Heart right ventricle (tissue), 16 donors: ENCODE measurements at regions of chr18 and their contacts with region 1.

Region 1: GRCh38 chr18:56575819-56576663 is 62.4 kb downstream of the TXNL1 start:
- DNase-seq: peak in 1 of 2 donors; percentile 56
- ATAC-seq: peak; percentile 64 to 96 (median 85)
- H3K4me3 ChIP-seq: peak overlapping the region in 2 of 10 donors; percentile 1 to 22
- H3K27ac ChIP-seq: peak overlapping the region; percentile 48 to 90 (median 70)
- H3K4me1 ChIP-seq: peaks cover 10 to 37% (median 33%) of the 10 kb centered on the region in 9 donors
- H3K27me3 ChIP-seq: no peaks in the 10 kb centered on the region
- CTCF ChIP-seq: peak; percentile 53 to 86 (median 71)

Region 2: DNA sequence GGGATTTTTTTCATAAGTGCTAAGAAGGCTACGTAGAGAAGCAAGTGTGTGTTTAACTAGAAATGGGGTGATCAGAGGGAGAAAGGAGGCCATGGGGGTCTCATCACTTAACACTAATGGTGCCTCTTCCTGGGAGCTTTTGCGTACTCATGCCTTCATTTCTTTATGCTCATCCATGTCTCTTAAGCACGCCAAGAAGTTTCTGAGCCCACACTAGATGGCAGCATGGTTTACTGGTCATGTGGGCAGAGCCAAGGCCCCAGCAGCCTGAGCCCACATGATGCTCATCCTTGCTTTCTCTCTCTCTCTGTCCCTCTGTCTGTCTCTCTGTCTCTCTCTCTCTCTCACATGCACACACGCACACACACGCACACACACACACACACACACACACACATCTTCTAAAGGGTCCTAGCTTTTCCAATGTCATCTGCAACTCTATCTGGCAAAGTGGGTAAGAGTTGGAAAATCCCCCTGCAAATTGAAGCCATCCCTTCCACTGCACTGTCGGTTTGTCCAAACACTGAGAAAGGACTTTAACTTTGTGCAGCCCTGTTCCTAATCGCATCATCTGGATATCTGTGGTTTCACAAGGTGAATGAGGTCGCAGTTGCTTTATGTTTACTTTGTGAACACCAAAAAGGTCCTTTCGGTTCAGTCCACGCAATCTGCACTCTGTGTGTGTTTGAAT is 1479.6 kb before region 1 on chr18:
- intact Hi-C with region 1: loop called in 1 of 10 experiments (anchors 10 kb)
- DNase-seq: peak in 1 of 2 donors; percentile 16
- ATAC-seq: peak in 7 of 8 donors; percentile 38 to 89 (median 86)
- H3K4me3 ChIP-seq: no peak overlapping the region
- H3K27ac ChIP-seq: peak overlapping the region in 1 of 10 donors; percentile 30
- H3K4me1 ChIP-seq: peaks cover 0 to 17% (median 8%) of the 10 kb centered on the region in 9 donors
- H3K27me3 ChIP-seq: no peaks in the 10 kb centered on the region
- CTCF ChIP-seq: peak in 8 of 9 donors; percentile 11 to 62 (median 42)

Region 3: DNA sequence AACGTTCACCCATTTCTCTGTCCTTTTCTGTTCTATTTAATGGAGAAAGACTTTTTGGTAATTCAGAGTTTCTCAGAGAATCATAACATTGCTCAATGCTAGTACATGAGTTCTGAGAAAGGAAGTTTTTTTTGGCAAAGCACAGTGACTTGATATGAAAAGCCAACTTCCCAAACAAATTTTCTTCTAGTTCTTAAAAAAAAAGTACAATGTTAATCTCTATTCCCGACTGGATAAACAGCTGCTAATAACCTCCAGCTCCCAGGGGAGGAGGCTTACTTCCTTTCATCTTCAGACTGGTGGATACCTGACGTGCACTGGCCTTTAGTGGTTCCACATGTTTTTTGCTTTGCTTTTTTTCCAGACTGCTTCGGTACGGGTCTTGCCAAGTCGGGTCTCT is 1332.2 kb before region 1 on chr18:
- intact Hi-C with region 1: loop called in 5 of 10 experiments (anchors 5 to 10 kb)
- DNase-seq: peak in 1 of 2 donors; percentile 89
- ATAC-seq: peak; percentile 75 to 91 (median 84)
- H3K4me3 ChIP-seq: peak overlapping the region in 1 of 10 donors; percentile 9
- H3K27ac ChIP-seq: peak overlapping the region; percentile 55 to 89 (median 76)
- H3K4me1 ChIP-seq: peaks cover 21 to 100% (median 80%) of the 10 kb centered on the region in 9 donors
- H3K27me3 ChIP-seq: no peaks in the 10 kb centered on the region
- CTCF ChIP-seq: no peak

Region 4: DNA sequence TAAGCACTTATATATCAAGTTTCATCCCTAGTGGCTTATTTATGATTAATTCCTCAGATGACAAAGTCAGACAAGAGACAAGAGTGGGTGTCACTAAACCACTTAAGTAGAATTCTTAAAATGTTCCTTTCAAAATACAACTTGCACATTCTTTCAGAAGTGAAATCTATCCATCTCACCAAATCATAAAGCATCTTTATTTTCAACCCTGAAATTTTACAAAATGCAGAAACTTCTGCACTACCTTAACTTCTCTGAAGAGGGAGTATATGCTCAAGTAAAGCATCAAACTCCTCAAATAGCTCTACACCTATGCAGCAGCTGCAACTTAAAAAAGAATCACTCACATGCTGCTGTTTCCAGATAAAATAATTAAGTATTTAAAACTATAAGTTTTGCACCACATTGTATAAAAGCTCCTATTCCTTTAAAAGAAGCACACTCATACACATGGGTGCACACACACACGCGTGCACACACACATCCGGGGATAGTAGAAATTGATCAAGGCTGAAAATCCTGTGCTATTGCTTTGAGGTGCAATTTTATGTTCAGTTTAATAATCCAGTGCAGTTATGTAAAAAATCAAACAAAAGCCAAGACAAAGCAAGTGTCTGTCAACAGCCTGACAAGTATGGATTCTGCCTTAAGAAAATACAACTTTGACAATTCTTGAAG is 1232.5 kb before region 1 on chr18:
- intact Hi-C with region 1: loop called in 3 of 10 experiments (anchors 5 to 10 kb)
- DNase-seq: no peak
- ATAC-seq: peak in 5 of 8 donors; percentile 46 to 67 (median 57)
- H3K4me3 ChIP-seq: no peak overlapping the region
- H3K27ac ChIP-seq: peak overlapping the region in 1 of 10 donors; percentile 1
- H3K4me1 ChIP-seq: peaks cover 2 to 66% (median 24%) of the 10 kb centered on the region in 9 donors
- H3K27me3 ChIP-seq: no peaks in the 10 kb centered on the region
- CTCF ChIP-seq: peak; percentile 24 to 73 (median 61)

Region 5: GRCh38 chr18:55781481-55781957 is 794.5 kb before region 1 on chr18:
- intact Hi-C with region 1: loop called in 4 of 10 experiments (anchors 5 to 10 kb)
- DNase-seq: peak; percentile 24 to 63
- ATAC-seq: peak in 7 of 8 donors; percentile 54 to 79 (median 65)
- H3K4me3 ChIP-seq: no peak overlapping the region
- H3K27ac ChIP-seq: peak overlapping the region in 9 of 10 donors; percentile 85 to 97 (median 93)
- H3K4me1 ChIP-seq: peaks cover 0 to 42% (median 28%) of the 10 kb centered on the region in 9 donors
- H3K27me3 ChIP-seq: peaks cover 0 to 8% (median 0%) of the 10 kb centered on the region in 7 donors
- CTCF ChIP-seq: peak; percentile 37 to 78 (median 66)

Region 6: DNA sequence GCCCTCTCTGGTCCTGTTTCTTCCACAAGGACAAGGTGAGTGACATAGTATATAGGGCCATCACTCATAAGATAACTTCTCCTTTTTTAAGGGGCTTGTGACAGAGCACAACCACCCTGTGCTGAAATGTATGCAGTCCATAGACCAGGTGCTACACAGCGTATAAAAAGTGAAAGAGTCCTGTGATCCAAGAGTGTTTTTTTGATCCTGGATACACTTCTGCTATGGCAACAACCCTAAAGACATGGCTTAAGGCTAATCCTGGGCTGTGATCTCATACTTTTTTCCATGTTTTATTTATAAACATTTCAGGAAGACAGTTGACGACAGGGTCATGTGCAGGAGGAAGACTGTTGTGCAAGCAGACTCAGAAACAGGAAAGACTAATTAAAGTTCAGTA is 587.5 kb before region 1 on chr18:
- intact Hi-C with region 1: loop called in 2 of 10 experiments (anchors 5 to 10 kb)
- DNase-seq: peak in 1 of 2 donors; percentile 71
- ATAC-seq: peak; percentile 86 to 98 (median 94)
- H3K4me3 ChIP-seq: no peak overlapping the region
- H3K27ac ChIP-seq: peak overlapping the region in 9 of 10 donors; percentile 12 to 88 (median 63)
- H3K4me1 ChIP-seq: peaks cover 0 to 14% (median 5%) of the 10 kb centered on the region in 9 donors
- H3K27me3 ChIP-seq: no peaks in the 10 kb centered on the region
- CTCF ChIP-seq: no peak